HEK293 (cell line): ENCODE measurements at regions of chr17 and their contacts with region 1.

Region 1: DNA sequence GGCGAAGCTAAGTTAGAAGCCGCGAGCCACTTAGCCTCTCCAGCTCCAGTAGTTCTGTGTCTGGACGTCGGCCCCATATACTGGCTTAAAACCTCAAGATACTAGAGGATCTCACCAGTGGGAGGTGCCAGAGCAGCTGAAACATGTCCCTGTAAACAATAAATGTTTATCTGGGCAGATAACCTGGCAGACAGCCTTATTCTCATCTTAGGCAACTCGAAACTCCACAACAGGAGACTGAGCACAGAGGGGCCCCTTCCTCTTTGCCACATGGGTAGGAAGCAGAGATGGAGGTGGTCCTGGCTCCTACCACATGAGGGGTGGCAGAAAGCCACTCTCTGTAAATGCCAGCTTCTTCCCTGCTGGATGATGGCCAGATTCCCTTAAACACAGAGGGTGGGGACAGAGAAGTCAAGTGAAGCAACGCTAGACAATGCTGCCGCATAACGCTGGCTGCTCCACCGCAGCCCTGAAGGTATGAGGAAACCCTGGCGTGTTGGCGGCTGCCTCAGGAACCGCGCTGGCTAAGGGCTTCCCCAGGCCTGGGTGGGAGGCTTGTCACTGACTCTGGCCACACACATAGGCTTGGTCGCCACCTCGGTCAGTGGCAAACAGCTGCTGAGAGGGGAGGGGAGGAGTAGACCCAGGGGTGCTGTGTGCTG is 67.9 kb downstream of the HIC1 start:
- H3K4me3 ChIP-seq: no peak overlapping the region
- H3K27ac ChIP-seq: peak overlapping the region; percentile 57; the same call in 1 of the 2 replicates
- H3K4me1 ChIP-seq: peaks cover 22% of the 10 kb centered on the region
- CTCF ChIP-seq: no peak

Region 2: DNA sequence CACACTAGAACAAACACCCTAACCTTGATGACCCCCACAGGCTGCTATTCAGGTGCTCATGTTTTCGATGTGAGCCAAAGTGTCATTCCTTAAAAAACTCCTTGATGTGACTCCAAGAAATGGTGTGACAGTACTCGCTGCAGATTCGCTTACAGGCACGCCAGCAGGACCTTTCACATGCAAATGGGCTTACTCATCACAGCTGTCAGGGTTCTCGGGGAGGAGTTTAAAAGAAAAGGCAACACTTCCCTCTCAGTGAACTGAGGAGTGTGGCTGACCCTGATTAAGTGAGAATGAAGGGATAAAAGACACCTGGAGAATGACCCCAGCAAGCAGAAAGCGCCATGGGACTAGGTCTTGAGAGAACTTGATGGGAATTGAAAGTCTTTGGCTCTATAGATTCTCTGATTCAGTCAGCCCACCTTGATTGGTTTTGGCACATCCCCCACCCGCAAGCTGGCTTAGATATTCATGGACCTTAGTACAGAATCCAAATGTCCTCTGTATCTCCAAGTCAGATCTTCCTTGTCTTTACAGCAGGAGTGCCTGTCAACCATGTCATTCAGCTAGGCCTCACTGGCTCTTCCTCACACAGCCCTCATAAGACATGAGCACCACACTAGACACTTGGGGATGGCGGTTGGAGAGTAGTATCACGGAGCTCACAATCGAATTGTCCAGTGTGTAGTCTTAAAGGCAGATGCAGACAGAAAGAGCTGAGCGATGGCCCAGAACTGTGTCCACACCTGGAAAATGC is 14.7 kb after region 1 on chr17:
- CTCF ChIA-PET with region 1: interaction called, 12 read pairs
- POLR2A ChIA-PET with region 1: no interaction called
- H3K4me3 ChIP-seq: no peak overlapping the region
- H3K27ac ChIP-seq: peak overlapping the region; percentile 37
- H3K4me1 ChIP-seq: peaks cover 25% of the 10 kb centered on the region
- CTCF ChIP-seq: no peak

Region 3: GRCh38 chr17:2207815-2208515 is 85.2 kb after region 1 on chr17:
- CTCF ChIA-PET with region 1: no interaction called
- POLR2A ChIA-PET with region 1: no interaction called
- H3K4me3 ChIP-seq: no peak overlapping the region
- H3K27ac ChIP-seq: no peak overlapping the region
- H3K4me1 ChIP-seq: peaks cover 4% of the 10 kb centered on the region; the same call in 1 of the 2 replicates
- CTCF ChIP-seq: no peak